ENCODE measurements at regions of chr5 and their contacts with region 1.

Region 1: DNA sequence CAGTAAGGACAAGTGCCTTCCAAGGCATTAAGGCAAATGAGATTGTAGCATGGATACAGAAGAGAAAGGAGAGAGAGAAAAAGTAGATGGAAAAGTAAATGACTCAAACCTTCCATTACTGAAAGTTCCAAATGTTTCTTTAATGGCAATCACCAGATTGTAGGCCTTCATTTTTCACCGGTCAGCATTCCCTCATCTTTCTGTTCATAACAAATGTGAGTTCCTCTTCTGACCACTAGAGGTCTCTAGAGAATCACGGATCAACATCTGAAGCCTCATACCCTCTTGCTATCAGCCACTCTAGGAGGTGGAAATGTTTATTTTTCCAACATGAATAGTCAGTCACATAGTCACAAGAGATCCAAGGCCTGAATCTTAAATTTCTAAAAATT is 73.6 kb upstream of the RPS23 start:
- DNase-seq: peak; percentile 83
- H3K4me3 Mint-ChIP-seq: no peak overlapping the region
- H3K27ac Mint-ChIP-seq: peak overlapping the region; percentile 68
- H3K4me1 Mint-ChIP-seq: peaks cover 38% of the 10 kb centered on the region
- H3K27me3 Mint-ChIP-seq: no peaks in the 10 kb centered on the region
- CTCF ChIP-seq: peak; percentile 46

Region 2: GRCh38 chr5:82421119-82421518 is 69.4 kb after region 1 on chr5:
- CTCF ChIA-PET with region 1: interaction called, 9 read pairs
- POLR2A ChIA-PET with region 1: interaction called, 13 read pairs
- intact Hi-C with region 1: loop called (anchors 1 kb)
- DNase-seq: peak; percentile 99
- H3K4me3 Mint-ChIP-seq: no peak overlapping the region
- H3K27ac Mint-ChIP-seq: no peak overlapping the region
- H3K4me1 Mint-ChIP-seq: peaks cover 51% of the 10 kb centered on the region
- H3K27me3 Mint-ChIP-seq: no peaks in the 10 kb centered on the region
- CTCF ChIP-seq: peak; percentile 49

Region 3: GRCh38 chr5:82641331-82642003 is 289.7 kb after region 1 on chr5:
- CTCF ChIA-PET with region 1: interaction called, 7 read pairs
- POLR2A ChIA-PET with region 1: no interaction called
- intact Hi-C with region 1: loop called (anchors 1 kb)
- DNase-seq: peak; percentile 94
- H3K4me3 Mint-ChIP-seq: no peak overlapping the region
- H3K27ac Mint-ChIP-seq: no peak overlapping the region
- H3K4me1 Mint-ChIP-seq: peaks cover 7% of the 10 kb centered on the region
- H3K27me3 Mint-ChIP-seq: no peaks in the 10 kb centered on the region
- CTCF ChIP-seq: peak; percentile 66

Region 4: GRCh38 chr5:83076742-83077661 is 725.3 kb after region 1 on chr5 and contains the starts of genes TMEM167A and XRCC4:
- CTCF ChIA-PET with region 1: no interaction called
- POLR2A ChIA-PET with region 1: interaction called, 3 read pairs
- intact Hi-C with region 1: loop called (anchors 10 kb)
- DNase-seq: peak; percentile 99
- H3K4me3 Mint-ChIP-seq: peak within 1 kb of the TSS; percentile 93
- H3K27ac Mint-ChIP-seq: peak within 1 kb of the TSS; percentile 96
- H3K4me1 Mint-ChIP-seq: peaks cover 21% of the 10 kb centered on the region
- H3K27me3 Mint-ChIP-seq: no peaks in the 10 kb centered on the region
- CTCF ChIP-seq: no peak
- total RNA-seq, gene TMEM167A: 84.1 and 122 TPM in 2 replicates
- total RNA-seq, gene XRCC4: 7.1 and 8.4 TPM in 2 replicates

Region 5: GRCh38 chr5:83564069-83564749 is 1212.5 kb after region 1 on chr5:
- CTCF ChIA-PET with region 1: interaction called, 45 read pairs
- POLR2A ChIA-PET with region 1: no interaction called
- intact Hi-C with region 1: loop called (anchors 2 kb)
- DNase-seq: peak; percentile 58
- H3K4me3 Mint-ChIP-seq: no peak overlapping the region
- H3K27ac Mint-ChIP-seq: no peak overlapping the region
- H3K4me1 Mint-ChIP-seq: peaks cover 27% of the 10 kb centered on the region
- H3K27me3 Mint-ChIP-seq: no peaks in the 10 kb centered on the region
- CTCF ChIP-seq: peak; percentile 51